ENCODE measurements at regions of chrX and their contacts with region 1.

Region 1: DNA sequence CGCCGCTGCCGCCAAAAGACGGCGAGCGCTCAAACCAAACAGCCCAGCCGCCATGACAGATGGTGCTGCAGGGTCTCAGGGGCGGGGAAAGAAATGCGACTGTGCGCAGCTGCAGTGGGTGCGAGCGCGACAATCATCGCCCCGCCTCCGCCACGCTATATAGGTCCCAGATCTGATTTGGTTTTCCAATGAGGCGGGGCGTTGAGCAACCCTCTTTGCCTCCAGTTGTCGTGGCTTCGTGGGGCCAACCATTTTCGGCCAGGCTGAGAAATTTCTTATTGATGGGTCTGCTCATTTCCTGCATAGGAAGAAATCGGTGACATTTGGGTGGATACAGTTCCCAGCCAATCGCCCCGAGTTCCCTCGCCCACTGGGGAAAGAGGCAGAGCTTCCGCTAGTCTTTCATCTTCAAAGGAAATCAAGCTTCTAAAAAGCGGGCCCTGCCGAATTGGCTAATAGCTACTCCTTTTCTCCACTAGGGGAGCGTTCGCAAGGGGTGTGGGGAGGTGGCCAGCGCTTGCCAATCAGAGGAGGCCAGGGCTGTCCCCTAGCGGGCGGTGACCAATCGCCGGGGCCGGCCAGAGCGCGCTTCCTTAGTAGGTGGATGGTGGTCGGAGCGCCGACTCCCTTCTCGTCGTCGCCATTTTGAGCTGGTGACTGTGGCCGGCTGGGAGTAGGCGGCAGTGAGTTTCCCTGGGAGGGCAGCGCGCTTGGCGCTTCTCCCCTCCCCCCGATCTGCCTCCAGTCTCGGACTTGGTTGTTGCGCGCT is at the starts of genes NDUFB11 and RBM10:
- DNase-seq: peak; percentile 72
- H3K4me3 ChIP-seq: peak within 1 kb of the TSS; percentile 80
- CTCF ChIP-seq: peak; percentile 66

Region 2: DNA sequence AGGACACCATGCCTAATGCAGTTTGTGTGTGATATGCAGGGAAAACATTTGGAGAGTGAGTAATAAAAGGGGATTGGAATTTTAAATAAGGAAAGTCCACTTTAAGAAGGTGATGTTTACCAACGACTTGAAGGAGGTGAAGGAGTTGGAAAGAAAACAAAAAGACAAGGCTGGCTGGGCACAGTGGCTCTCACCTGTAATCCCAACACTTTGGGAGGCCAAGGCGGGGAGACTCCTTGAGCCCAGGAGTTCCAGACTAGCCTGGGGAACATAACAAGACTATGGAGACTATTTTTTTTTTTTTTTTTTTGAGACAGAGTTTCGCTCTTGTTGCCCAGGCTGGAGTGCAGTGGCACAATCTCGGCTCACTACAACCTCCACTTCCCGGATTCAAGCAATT is 11.3 kb before region 1 on chrX:
- CTCF ChIA-PET with region 1: interaction called, 17 read pairs
- POLR2A ChIA-PET with region 1: interaction called, 7 read pairs
- DNase-seq: no peak
- H3K4me3 ChIP-seq: no peak overlapping the region
- CTCF ChIP-seq: no peak

Region 3: DNA sequence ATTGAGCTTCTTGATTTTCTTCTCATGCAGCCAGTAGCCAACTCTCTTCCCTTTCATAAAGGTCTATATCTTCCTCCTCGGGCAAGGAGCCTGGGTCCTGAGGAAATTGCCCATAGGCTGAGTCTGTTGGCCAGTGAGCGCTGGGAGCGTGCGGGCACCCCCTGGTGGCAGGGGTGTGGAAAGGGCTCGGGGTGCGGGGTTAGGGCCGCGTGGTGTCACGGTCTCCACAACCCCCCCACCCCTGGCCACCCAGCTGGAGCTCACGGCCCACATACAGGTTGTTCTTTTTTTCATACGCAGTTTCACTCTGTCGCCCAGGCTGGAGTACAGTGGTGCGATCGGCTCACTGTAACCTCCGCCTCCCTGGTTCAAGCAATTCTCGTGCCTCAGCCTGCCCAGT is 13.3 kb after region 1 on chrX:
- CTCF ChIA-PET with region 1: interaction called, 14 read pairs
- POLR2A ChIA-PET with region 1: no interaction called
- DNase-seq: no peak
- H3K4me3 ChIP-seq: no peak overlapping the region
- CTCF ChIP-seq: no peak